ENCODE measurements at regions of chr22 and their contacts with region 1.

Region 1: GRCh38 chr22:26086359-26086758 is 82.9 kb upstream of the SEZ6L start:
- DNase-seq: no peak
- ATAC-seq: no peak

Region 2: GRCh38 chr22:25942856-25943411 is 143.4 kb before region 1 on chr22:
- intact Hi-C with region 1: no loop called
- DNase-seq: peak; percentile 75
- ATAC-seq: peak; percentile 64

Region 3: GRCh38 chr22:26330966-26331625 is 244.7 kb after region 1 on chr22:
- intact Hi-C with region 1: loop called (anchors 2 kb)
- DNase-seq: no peak
- ATAC-seq: peak; percentile 65